Activated CD4-positive, alpha-beta memory T cell treated with anti-CD3 and anti-CD28 coated beads for 36 hours (primary cell): ENCODE measurements at regions of chr18 and their contacts with region 1.

Region 1: DNA sequence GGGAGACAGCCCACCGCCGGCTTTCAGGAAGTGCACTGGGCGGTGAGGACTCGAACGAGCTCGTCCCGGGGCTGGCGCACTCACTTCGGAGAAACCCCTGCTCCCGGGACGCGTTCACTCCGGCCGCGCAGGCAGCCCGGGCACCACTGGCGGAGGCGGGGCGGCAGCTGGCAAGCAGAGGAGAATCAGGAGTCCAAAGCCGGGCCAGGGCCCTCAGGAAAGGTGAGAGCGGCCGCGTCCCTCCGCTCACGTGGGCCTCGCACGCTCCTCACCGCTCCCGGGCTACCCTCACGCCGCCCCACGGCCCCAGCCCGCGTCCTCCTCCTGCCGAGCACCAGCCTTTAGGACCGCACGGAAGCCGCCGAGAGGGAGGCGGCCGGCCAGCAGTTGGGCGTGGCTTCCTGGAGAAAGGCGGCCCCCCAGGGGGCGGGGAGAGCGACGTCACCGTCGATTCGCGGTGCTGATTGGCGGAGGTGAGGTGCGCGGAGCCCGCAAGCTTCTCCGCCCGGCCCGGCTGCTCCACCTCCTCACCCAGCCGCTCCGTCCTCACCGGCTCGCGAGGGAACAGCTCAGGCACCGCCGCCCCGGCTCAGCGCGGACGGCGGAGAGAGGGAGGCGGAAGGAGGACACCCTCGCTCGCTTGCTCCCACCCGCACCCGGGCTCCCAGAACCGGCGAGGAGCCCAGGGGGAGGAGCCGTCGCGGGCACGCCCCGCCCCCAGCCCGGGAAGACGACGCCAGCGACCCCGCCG is at the start of gene ZCCHC2:
- DNase-seq: peak; percentile 99
- H3K4me3 Mint-ChIP-seq: peak within 1 kb of the TSS; percentile 94
- H3K27ac Mint-ChIP-seq: peak within 1 kb of the TSS; percentile 94
- H3K4me1 Mint-ChIP-seq: peaks cover 16% of the 10 kb centered on the region
- H3K27me3 Mint-ChIP-seq: no peaks in the 10 kb centered on the region
- total RNA-seq, gene ZCCHC2: 24.9 to 27.5 TPM

Region 2: DNA sequence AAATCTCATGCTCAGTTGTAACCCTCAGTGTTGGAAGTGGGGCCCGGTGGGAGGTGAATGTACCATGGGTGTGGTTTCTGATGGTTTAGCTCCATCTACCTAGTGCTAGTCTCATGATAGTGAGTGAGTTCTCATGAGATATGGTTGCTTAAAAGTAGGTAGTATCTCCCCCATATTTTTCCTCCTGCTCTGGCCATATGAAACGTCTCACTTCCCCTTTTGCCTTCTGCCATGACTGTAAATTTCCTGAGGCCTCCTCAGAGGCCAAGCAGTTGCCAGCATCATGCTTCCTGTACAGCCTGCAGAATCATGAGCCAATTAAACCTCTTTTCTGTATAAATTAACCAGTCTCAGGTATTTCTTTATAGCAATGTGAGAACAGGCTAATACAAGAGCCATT is 567.0 kb before region 1 on chr18:
- CTCF ChIA-PET with region 1: no interaction called
- POLR2A ChIA-PET with region 1: no interaction called
- intact Hi-C with region 1: loop called (anchors 10 kb)
- DNase-seq: no peak
- H3K4me3 Mint-ChIP-seq: no peak overlapping the region
- H3K27ac Mint-ChIP-seq: no peak overlapping the region
- H3K4me1 Mint-ChIP-seq: peaks cover 34% of the 10 kb centered on the region
- H3K27me3 Mint-ChIP-seq: peaks cover 14% of the 10 kb centered on the region

Region 3: GRCh38 chr18:62324917-62325805 is 197.5 kb before region 1 on chr18 and contains the start of gene TNFRSF11A:
- CTCF ChIA-PET with region 1: no interaction called
- POLR2A ChIA-PET with region 1: interaction called, 3 read pairs
- intact Hi-C with region 1: loop called (anchors 2 kb)
- DNase-seq: peak; percentile 79
- H3K4me3 Mint-ChIP-seq: peak within 1 kb of the TSS; percentile 79
- H3K27ac Mint-ChIP-seq: peak within 1 kb of the TSS; percentile 46
- H3K4me1 Mint-ChIP-seq: peaks cover 28% of the 10 kb centered on the region
- H3K27me3 Mint-ChIP-seq: peaks cover 68% of the 10 kb centered on the region
- total RNA-seq, gene TNFRSF11A: 5.7 to 6.1 TPM

Region 4: GRCh38 chr18:62505669-62506494 is 16.8 kb before region 1 on chr18:
- CTCF ChIA-PET with region 1: interaction called, 5 read pairs
- POLR2A ChIA-PET with region 1: interaction called, 23 read pairs
- intact Hi-C with region 1: loop called (anchors 1 kb)
- DNase-seq: peak; percentile 66
- H3K4me3 Mint-ChIP-seq: peak overlapping the region; percentile 58
- H3K27ac Mint-ChIP-seq: peak overlapping the region; percentile 88
- H3K4me1 Mint-ChIP-seq: peaks cover 24% of the 10 kb centered on the region
- H3K27me3 Mint-ChIP-seq: no peaks in the 10 kb centered on the region

Region 5: DNA sequence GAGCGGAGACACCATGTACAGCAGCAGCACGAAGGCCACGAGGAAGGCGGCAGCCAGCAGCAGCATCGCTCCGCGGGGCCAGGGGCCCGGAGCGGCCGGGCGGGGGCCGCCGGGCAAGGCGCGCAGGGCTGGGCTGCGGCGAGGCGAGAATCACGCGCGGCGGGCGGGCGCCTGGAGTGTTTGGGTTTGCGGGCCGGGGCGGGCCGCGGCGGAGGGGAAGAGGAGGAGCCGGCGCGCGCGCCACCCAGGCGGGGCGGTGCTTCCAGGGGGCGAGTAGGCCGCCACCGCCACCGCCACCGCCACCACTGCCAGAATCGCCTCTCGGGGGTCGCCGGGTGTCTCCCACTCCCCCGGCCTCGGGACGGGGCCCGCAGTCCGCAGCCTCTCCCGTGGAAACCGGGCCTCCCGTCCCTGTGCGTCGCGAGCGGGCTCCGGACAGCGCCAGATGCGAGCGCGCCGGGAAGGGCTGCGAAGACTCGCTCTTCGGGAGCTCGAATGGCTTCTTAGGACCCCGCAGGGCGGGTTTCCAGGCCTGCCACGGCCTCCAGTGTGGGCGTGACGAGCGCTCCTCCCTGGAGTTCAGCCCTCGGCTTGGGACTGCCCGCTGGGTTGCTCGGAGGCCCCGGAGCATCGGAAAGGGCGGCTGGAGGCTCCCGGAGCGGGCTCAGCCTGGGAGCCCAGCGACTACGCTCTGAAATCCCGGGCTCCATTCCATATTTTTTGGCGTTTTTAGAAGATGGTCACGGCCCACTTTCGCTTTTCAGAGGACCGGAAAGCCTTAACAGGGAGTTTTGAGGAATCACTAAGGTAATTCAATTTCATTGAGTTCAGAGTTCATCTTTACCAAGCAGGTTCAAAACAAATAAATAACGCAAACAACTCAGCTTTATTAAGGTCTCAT is 844.6 kb after region 1 on chr18 and contains the start of gene KDSR:
- CTCF ChIA-PET with region 1: no interaction called
- POLR2A ChIA-PET with region 1: interaction called, 3 read pairs
- intact Hi-C with region 1: loop called (anchors 5 kb)
- DNase-seq: peak; percentile 89
- H3K4me3 Mint-ChIP-seq: peak within 1 kb of the TSS; percentile 90
- H3K27ac Mint-ChIP-seq: peak within 1 kb of the TSS; percentile 86
- H3K4me1 Mint-ChIP-seq: peaks cover 29% of the 10 kb centered on the region
- H3K27me3 Mint-ChIP-seq: no peaks in the 10 kb centered on the region
- total RNA-seq, gene KDSR: 72.8 to 77.2 TPM